H1 (cell line): ENCODE measurements at regions of chr17 and their contacts with region 1.

Region 1: GRCh38 chr17:40075201-40075941 is 12.6 kb downstream of the THRA start:
- DNase-seq: peak; percentile 66 to 92
- H3K4me3 ChIP-seq: 0 out of 8 replicates have a peak overlapping the region, but pooled peaks of 1 of the 4 experiments have one; percentile 19
- H3K27ac ChIP-seq: no peak overlapping the region; the same call in 1 of the 2 replicates
- H3K4me1 ChIP-seq: peaks cover 10 to 31% (median 28%) of the 10 kb centered on the region in 4 experiments
- H3K27me3 ChIP-seq: no peaks in the 10 kb centered on the region
- CTCF ChIP-seq: peak; percentile 87 to 94 (median 88)
- EP300 ChIP-seq: 0 out of 3 replicates have a peak, but pooled peaks of 1 of the 2 experiments have one; percentile 41
- POLR2A ChIP-seq: no peak
- RAD21 ChIP-seq: peak; percentile 67 to 74

Region 2: GRCh38 chr17:40015005-40015997 is 60.1 kb before region 1 on chr17 and contains the start of gene CSF3:
- CTCF ChIA-PET with region 1: interaction called, 876 read pairs
- POLR2A ChIA-PET with region 1: interaction called, 6 read pairs
- DNase-seq: no peak
- H3K4me3 ChIP-seq: no peak within 1 kb of the TSS
- H3K27ac ChIP-seq: peak within 1 kb of the TSS; percentile 10; the same call in 1 of the 2 replicates
- H3K4me1 ChIP-seq: peaks cover 0 to 27% (median 18%) of the 10 kb centered on the region in 4 experiments; a peak in 6 of 7 replicates
- H3K27me3 ChIP-seq: peaks cover 0 to 2% (median 0%) of the 10 kb centered on the region in 4 experiments; a peak in 2 of 7 replicates
- CTCF ChIP-seq: no peak
- EP300 ChIP-seq: no peak
- POLR2A ChIP-seq: no peak
- RAD21 ChIP-seq: no peak
- total RNA-seq, gene CSF3: not detected in 2 replicates

Region 3: GRCh38 chr17:40038882-40039513 is 36.4 kb before region 1 on chr17:
- CTCF ChIA-PET with region 1: interaction called, 876 read pairs
- POLR2A ChIA-PET with region 1: interaction called, 13 read pairs
- DNase-seq: peak in 1 of 2 experiments; percentile 64
- H3K4me3 ChIP-seq: no peak overlapping the region
- H3K27ac ChIP-seq: no peak overlapping the region
- H3K4me1 ChIP-seq: peaks cover 0 to 12% (median 4%) of the 10 kb centered on the region in 4 experiments; a peak in 5 of 7 replicates
- H3K27me3 ChIP-seq: no peaks in the 10 kb centered on the region
- CTCF ChIP-seq: peak; percentile 69 to 78 (median 72)
- EP300 ChIP-seq: no peak
- POLR2A ChIP-seq: no peak
- RAD21 ChIP-seq: peak; percentile 49 to 70

Region 4: GRCh38 chr17:40086150-40087044 is 11.0 kb after region 1 on chr17:
- CTCF ChIA-PET with region 1: interaction called, 521 read pairs
- POLR2A ChIA-PET with region 1: interaction called, 9 read pairs
- DNase-seq: peak in 1 of 2 experiments; percentile 94
- H3K4me3 ChIP-seq: no peak overlapping the region
- H3K27ac ChIP-seq: no peak overlapping the region
- H3K4me1 ChIP-seq: peaks cover 0 to 14% (median 0%) of the 10 kb centered on the region in 4 experiments; a peak in 1 of 7 replicates
- H3K27me3 ChIP-seq: no peaks in the 10 kb centered on the region
- CTCF ChIP-seq: peak; percentile 89 to 96 (median 89)
- EP300 ChIP-seq: no peak
- POLR2A ChIP-seq: no peak
- RAD21 ChIP-seq: peak; percentile 95 to 98

Region 5: DNA sequence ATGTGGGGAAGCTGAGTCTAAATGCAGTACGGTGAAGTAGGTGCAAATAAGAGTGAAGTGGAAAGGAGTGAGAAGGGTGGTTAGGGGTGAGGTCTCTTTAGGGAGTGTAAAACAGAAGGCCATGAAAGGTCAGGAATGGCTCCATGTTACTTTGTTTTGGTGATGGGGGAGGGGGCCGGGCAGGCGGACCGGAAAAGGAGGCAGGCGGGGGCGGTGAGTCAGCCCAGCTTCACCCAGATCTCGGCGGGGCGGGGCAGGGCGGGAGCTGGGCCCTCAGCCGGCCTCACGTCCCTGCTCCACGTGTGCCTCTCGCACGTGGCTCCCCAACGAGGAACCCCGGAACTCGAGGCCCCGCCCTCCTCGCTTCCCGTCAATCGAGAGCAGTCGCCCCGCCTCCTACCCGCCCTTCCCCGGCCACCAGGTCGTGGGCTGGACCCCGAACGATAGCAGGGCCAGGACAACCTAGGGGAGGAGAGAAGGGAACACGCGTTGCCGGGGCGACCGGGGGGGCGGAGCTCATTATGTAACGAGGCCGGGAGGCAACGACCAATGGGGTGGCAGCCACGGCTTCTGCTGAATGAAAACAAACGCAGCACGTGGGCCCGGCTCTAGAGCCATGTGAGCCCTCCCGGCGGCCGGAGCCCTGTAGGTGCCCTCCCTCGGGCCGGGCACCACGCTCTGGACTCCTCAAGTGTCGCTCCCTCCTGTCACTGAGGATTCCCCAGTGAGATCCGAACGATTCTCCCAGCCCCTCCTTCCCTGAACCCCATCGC is 23.7 kb after region 1 on chr17:
- CTCF ChIA-PET with region 1: interaction called, 33 read pairs
- POLR2A ChIA-PET with region 1: interaction called, 11 read pairs
- DNase-seq: peak; percentile 95 to 97
- H3K4me3 ChIP-seq: peak overlapping the region; percentile 48 to 83 (median 63)
- H3K27ac ChIP-seq: 0 out of 2 replicates have a peak overlapping the region, but pooled peaks have one; percentile 25
- H3K4me1 ChIP-seq: peaks cover 14 to 33% (median 23%) of the 10 kb centered on the region in 4 experiments
- H3K27me3 ChIP-seq: peaks cover 6 to 24% (median 16%) of the 10 kb centered on the region in 4 experiments; a peak in 6 of 7 replicates
- CTCF ChIP-seq: no peak
- EP300 ChIP-seq: no peak
- POLR2A ChIP-seq: no peak
- RAD21 ChIP-seq: no peak

Region 6: GRCh38 chr17:40121181-40122135 is 46.1 kb after region 1 on chr17 and contains the start of gene MSL1:
- CTCF ChIA-PET with region 1: interaction called, 13 read pairs
- POLR2A ChIA-PET with region 1: interaction called, 8 read pairs
- DNase-seq: peak in 1 of 2 experiments; percentile 88
- H3K4me3 ChIP-seq: peak within 1 kb of the TSS; percentile 80 to 91 (median 86)
- H3K27ac ChIP-seq: peak within 1 kb of the TSS; percentile 84
- H3K4me1 ChIP-seq: peaks cover 0 to 3% (median under 1%) of the 10 kb centered on the region in 4 experiments; a peak in 2 of 7 replicates
- H3K27me3 ChIP-seq: no peaks in the 10 kb centered on the region; a peak in 1 of 7 replicates
- CTCF ChIP-seq: no peak
- EP300 ChIP-seq: 0 out of 3 replicates have a peak, but pooled peaks of 1 of the 2 experiments have one; percentile 8
- POLR2A ChIP-seq: peak in 1 of 2 experiments; percentile 37; a peak in 1 of 3 replicates
- RAD21 ChIP-seq: no peak
- total RNA-seq, gene MSL1: 66.5 and 69.2 TPM in 2 replicates